ENCODE measurements at regions of chr7 and their contacts with region 1.

Region 1: GRCh38 chr7:92447345-92448204 is at the start of gene GATAD1:
- DNase-seq: peak; percentile 91 to 92
- ATAC-seq: peak; percentile 98 to 100 (median 99)
- H3K4me3 ChIP-seq: peak within 1 kb of the TSS; percentile 75 to 100 (median 96)
- H3K27ac ChIP-seq: peak within 1 kb of the TSS; percentile 67 to 99 (median 96)
- H3K4me1 ChIP-seq: peaks cover 0 to 16% (median 13%) of the 10 kb centered on the region in 9 donors
- H3K27me3 ChIP-seq: no peaks in the 10 kb centered on the region
- CTCF ChIP-seq: peak; percentile 82 to 97 (median 92)
- total RNA-seq, gene GATAD1: 10.0 to 16.8 (median 14.2) TPM

Region 2: DNA sequence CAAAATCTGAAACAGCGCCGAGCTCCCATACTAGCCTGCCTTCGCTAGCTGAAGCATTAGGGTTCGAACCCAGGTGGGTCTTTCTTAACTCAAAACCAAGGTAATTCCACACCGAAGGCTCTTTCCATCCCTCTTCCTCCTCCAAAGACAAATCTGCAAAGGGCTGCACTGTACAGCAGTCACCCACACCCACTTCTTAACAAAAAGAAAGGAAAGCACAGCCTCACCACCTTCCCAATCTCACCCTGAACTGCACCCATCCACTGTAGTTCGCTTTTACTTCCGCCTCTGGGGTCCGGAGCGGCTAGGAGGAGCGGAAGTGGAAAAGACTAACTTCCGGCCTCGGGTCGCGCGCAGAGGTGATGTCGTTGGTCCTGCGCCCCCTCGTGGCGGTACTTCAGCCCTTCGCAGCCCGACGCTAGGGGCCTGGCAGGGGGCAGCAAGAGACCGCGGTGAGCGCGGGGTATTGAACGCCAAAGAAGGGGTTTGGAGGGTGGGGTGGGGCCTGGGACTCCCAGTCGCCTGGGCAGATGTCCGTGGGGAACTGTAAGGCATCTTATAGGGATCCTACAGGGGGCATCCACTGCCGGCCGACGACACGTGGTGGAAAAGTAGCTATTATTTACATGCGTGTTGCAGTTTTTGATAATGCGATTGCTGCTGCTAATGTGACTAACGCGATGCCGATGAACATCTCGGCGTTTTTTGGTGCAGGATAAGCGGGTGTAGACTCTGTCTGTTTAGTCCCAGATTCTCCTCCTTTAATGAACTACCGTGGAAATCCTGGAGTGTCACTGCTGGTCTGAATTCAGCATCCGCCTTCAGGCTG is 566.9 kb before region 1 on chr7 and contains the start of gene MTERF1:
- intact Hi-C with region 1: loop called in 2 of 10 experiments (anchors 5 to 10 kb)
- DNase-seq: peak; percentile 93
- ATAC-seq: peak; percentile 97 to 100 (median 99)
- H3K4me3 ChIP-seq: peak within 1 kb of the TSS; percentile 59 to 91 (median 80)
- H3K27ac ChIP-seq: peak within 1 kb of the TSS in 9 of 10 donors; percentile 8 to 84 (median 46)
- H3K4me1 ChIP-seq: peaks cover 0 to 29% (median 23%) of the 10 kb centered on the region in 9 donors
- H3K27me3 ChIP-seq: no peaks in the 10 kb centered on the region
- CTCF ChIP-seq: peak; percentile 89 to 100 (median 95)
- total RNA-seq, gene MTERF1: 5.9 to 9.9 (median 7.1) TPM

Region 3: GRCh38 chr7:92134271-92135051 is 313.1 kb before region 1 on chr7 and contains the start of gene CYP51A1:
- intact Hi-C with region 1: loop called in 3 of 10 experiments (anchors 5 kb)
- DNase-seq: peak; percentile 91 to 95
- ATAC-seq: peak; percentile 96 to 98 (median 98)
- H3K4me3 ChIP-seq: peak within 1 kb of the TSS; percentile 77 to 99 (median 89)
- H3K27ac ChIP-seq: peak within 1 kb of the TSS; percentile 90 to 99 (median 94)
- H3K4me1 ChIP-seq: peaks cover 0 to 26% (median 16%) of the 10 kb centered on the region in 9 donors
- H3K27me3 ChIP-seq: no peaks in the 10 kb centered on the region
- CTCF ChIP-seq: peak in 4 of 9 donors; percentile 11 to 27 (median 20)
- total RNA-seq, gene CYP51A1: 20.3 to 45.5 (median 27.0) TPM

Region 4: DNA sequence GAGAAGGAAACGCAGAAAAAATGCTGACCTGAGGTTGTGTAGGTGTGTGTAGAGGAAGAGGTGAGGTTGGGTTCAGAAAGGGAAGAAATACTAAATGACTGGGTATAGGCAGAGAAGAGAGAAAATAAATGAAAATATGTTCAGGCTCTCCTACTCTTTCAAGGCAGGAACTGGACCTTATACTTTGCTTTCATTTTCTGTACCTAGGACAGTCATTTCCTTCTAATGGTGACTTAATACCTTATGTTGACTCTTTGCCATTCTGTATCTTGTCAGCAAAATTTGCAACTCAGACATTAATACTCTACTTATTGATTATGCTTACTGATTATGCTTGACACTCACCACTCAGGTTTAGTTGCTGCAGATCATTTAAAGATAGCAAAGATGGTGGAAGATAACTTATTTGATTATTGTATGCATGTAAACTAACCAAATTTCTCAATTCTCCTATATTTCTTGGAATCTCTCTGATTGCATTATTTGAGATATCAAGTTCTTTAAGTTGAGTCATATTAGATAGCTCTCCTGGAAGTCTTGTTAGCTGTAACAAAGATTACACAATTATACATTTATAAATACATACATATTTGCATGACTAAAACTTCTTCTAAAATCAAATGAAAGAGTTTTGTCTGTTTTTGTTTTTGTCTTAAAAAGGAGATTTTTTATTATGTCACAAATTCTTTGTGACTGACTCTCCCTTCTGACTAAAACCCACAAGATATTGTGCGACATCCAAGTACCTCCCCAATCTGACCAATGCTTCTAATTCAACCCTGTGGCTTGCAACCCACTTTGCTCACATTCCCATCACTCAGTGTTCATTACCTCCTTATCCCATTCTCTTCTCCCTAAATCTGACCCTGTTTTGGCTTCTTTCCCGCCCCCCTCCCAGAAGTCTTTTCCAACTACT is 288.7 kb before region 1 on chr7:
- intact Hi-C with region 1: no loop called
- DNase-seq: no peak
- ATAC-seq: no peak
- H3K4me3 ChIP-seq: no peak overlapping the region
- H3K27ac ChIP-seq: no peak overlapping the region
- H3K4me1 ChIP-seq: no peaks in the 10 kb centered on the region
- H3K27me3 ChIP-seq: no peaks in the 10 kb centered on the region
- CTCF ChIP-seq: no peak

Region 5: DNA sequence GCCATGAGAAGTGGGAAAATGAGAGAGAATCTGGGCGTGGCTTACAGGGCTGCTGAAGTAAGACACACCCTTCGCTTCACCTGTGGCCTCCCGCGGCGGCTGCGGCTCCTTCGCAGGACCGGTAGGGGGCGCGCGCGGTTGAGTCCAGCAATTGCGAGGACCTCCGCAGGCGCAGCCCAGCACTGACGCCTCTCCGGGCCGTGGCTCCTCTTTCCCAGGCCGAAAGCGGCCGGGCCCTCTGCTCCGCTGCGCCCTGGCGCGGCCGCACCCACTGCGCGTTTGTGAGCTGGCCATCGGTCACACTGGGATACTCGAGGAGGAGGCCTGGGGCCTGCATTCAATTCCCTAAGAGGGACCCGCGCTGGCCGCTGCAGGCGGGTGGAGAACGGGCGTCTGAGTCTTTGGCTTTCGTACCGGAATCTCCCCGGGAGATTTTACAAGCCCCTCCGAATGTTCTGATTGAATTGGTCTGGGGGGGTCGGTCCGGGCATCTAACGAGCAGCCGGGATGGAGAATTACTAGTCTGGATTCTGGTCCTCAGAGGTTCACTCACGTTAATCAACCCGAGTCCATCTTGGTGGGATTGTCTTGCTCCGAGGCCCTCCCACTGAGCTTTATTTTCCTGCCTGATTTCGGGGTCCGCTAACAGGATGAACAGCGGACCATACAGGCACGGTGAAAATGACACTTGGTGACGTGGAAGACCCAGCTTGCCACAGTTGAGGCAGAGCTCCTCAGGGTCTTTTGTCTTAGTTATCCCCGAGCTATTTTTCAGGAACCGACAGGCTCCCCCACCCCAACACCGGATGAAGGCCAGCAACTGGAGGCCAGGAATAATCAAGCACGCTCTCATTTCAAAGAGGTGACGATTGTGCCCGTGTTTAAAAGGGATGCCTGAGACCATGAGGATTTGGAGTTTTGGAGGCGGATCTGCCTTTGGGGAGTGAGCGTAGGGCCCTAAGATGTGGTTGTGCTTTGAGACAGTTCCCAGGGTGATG is 268.3 kb before region 1 on chr7 and contains the start of gene LRRD1:
- intact Hi-C with region 1: loop called in 3 of 10 experiments (anchors 5 to 10 kb)
- DNase-seq: peak; percentile 80 to 89
- ATAC-seq: peak; percentile 97 to 100 (median 98)
- H3K4me3 ChIP-seq: peak within 1 kb of the TSS; percentile 39 to 69 (median 63)
- H3K27ac ChIP-seq: peak within 1 kb of the TSS in 9 of 10 donors; percentile 70 to 83 (median 78)
- H3K4me1 ChIP-seq: peaks cover 0 to 14% (median 0%) of the 10 kb centered on the region in 9 donors
- H3K27me3 ChIP-seq: no peaks in the 10 kb centered on the region
- CTCF ChIP-seq: peak; percentile 93 to 100 (median 99)
- total RNA-seq, gene LRRD1: 0.08 to 0.18 (median 0.12) TPM in 4 of 10 donors, not detected in the others

Region 6: DNA sequence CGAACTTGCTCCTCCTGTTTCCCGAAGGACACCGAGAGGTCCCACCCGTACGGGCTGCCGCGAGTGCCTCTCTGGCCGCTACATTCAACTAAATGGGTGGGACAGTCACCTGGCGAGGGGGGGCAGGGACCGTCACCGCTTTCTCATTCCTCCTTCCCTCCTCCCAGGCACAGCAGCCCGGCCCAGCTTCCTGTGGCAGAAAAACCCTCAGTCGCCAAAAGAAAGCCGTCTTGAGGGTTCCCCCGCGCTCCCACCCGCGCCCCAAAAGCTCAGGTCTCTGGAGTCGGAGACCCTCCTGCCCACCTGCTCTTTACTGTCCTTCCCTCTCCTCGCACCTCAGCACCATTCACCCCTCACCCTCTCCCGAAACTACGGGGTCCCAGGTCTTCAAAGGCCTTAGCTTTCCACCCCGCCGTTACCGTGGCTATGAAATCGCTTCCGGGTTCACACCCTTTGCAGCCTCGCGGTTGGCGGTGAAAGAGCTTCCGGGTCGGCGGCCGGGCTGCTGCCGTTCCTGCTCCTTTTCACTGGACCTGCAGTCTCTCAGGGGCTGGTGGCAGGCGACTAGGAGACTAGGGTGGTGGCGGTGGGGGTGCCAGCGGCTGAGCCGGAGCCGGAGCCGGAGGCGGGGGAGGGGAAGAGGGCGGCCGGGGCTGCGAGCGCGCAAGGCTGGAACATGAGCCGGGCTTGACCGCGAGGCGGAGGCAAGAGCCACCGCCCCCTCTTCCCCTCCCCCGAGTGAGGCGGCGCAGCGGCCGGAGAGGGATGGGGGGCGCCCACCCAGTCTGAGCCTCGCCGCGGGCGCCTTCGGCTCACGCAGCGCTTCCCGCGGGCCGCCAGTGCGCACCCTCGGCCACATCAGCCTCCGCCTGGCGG is 201.8 kb before region 1 on chr7 and contains the starts of genes ANKIB1 and KRIT1:
- intact Hi-C with region 1: loop called in 6 of 10 experiments (anchors 2 to 10 kb)
- DNase-seq: peak; percentile 87 to 91
- ATAC-seq: peak; percentile 95 to 97 (median 95)
- H3K4me3 ChIP-seq: peak within 1 kb of the TSS; percentile 66 to 91 (median 84)
- H3K27ac ChIP-seq: peak within 1 kb of the TSS; percentile 55 to 96 (median 89)
- H3K4me1 ChIP-seq: peaks cover 2 to 43% (median 36%) of the 10 kb centered on the region in 9 donors
- H3K27me3 ChIP-seq: no peaks in the 10 kb centered on the region
- CTCF ChIP-seq: peak in 6 of 9 donors; percentile 11 to 54 (median 36)
- total RNA-seq, gene ANKIB1: 28.7 to 71.0 (median 45.7) TPM
- total RNA-seq, gene KRIT1: 21.9 to 40.8 (median 32.1) TPM

Region 7: GRCh38 chr7:92421676-92422435 is 25.7 kb before region 1 on chr7:
- intact Hi-C with region 1: loop called in 5 of 10 experiments (anchors 1 to 2 kb)
- DNase-seq: no peak
- ATAC-seq: no peak
- H3K4me3 ChIP-seq: no peak overlapping the region
- H3K27ac ChIP-seq: no peak overlapping the region
- H3K4me1 ChIP-seq: peaks cover 0 to 13% (median 0%) of the 10 kb centered on the region in 9 donors
- H3K27me3 ChIP-seq: peaks cover 0 to 17% (median 15%) of the 10 kb centered on the region in 7 donors
- CTCF ChIP-seq: no peak

Measured in heart right ventricle (tissue), 16 donors.